WTC11 (cell line): ENCODE measurements at regions of chr4 and their contacts with region 1.

Region 1: DNA sequence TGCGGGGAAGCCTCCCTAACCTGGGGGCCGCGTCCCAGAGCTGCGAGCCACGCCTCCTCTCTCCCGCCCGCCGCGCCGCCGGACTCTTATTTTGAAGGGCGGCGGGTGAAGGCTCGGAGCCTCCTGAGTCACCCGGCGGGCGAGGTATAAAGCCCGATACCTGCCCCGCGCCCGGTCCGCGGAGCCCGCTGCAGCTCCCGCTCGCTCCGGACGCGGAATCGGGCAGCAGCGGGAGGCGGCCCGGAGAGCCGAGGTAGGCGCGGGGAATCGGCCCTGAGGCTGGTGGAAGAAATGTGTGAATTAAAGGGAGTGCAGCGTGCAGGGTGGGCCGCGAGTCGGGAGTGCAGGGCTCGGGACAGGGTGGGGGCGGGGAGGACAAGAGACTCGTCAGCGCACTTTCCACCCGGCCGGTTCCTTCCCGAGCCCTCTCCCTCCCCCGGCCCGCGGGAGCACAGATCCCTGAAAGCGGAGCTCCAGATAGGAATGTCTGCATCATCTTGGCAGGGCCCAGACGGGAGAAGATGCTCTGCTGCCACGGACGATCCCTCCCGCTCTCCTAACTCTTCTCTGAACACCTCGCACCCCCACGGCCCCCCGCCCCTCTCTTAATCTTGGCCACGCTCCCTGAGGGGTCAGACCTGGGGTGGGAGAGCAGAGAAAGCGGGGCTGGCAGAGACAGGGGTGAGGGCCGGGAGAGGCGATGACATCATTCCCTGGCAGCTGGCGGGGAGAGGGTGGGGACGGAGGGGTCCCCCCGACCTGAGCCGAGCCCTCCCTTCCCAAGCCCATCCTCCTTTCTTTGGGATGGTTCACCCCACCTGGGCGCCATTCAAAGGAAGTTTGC is 177.9 kb downstream of the CBR4 start:
- DNase-seq: peak; percentile 85
- ATAC-seq: peak; percentile 74
- H3K4me3 Mint-ChIP-seq: peak overlapping the region; percentile 98
- H3K27ac Mint-ChIP-seq: peak overlapping the region; percentile 96
- H3K4me1 Mint-ChIP-seq: peaks cover 42% of the 10 kb centered on the region
- H3K27me3 Mint-ChIP-seq: peaks cover 29% of the 10 kb centered on the region
- CTCF ChIP-seq: no peak

Region 2: DNA sequence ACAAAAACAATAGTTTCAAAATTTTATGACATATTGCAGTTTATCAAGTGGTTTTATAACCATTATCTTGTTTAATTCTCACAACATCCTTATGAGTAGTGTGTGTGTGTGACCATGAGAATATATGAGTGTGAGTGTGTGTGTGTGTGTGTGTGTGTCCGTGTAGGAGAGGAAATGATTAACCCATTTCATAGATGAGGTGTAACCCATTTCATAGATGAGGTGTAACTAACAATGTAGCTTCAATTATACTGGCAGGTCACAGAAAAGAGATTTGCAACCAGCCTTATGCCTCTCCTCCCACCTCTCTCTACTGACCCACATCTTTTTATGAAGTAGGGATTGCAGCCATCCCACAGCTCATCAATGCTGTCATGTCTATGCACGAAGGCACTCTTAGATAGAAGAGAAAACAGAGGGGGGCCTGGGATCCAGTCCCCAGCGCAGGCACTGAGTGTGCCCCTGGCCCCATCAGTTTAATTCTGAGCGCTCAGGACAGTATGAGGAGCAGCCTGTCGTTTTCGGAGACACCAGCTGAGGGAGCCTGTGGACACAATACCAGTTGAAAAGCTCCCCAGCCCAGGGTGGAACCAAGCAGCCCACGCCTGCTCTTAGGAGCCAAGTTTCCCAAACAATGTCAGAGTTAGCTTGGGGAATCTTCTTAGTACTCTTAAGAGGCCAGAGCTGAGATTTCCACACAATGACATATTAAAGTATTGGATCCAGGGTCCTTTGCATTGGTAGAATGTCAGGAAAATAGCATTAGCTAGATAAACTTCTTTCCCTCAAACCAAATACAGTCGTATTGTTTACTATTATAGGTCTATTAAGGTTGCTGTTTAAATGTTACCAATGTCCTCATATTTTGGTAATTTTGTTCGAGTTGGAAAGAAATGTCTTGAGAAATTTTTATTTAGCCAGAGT is 246.7 kb before region 1 on chr4:
- CTCF ChIA-PET with region 1: interaction called, 10 read pairs
- POLR2A ChIA-PET with region 1: no interaction called
- DNase-seq: peak; percentile 85
- ATAC-seq: peak; percentile 100
- H3K4me3 Mint-ChIP-seq: no peak overlapping the region
- H3K27ac Mint-ChIP-seq: no peak overlapping the region
- H3K4me1 Mint-ChIP-seq: peaks cover 4% of the 10 kb centered on the region
- H3K27me3 Mint-ChIP-seq: no peaks in the 10 kb centered on the region
- CTCF ChIP-seq: peak; percentile 50; the same call in 1 of the 2 replicates

Region 3: GRCh38 chr4:168710353-168710946 is 121.7 kb before region 1 on chr4:
- CTCF ChIA-PET with region 1: interaction called, 27 read pairs
- POLR2A ChIA-PET with region 1: no interaction called
- DNase-seq: no peak
- ATAC-seq: peak; percentile 75
- H3K4me3 Mint-ChIP-seq: no peak overlapping the region
- H3K27ac Mint-ChIP-seq: no peak overlapping the region
- H3K4me1 Mint-ChIP-seq: peaks cover 5% of the 10 kb centered on the region; the same call in 1 of the 2 replicates
- H3K27me3 Mint-ChIP-seq: 0 out of 2 replicates have a peak, but pooled peaks cover 3% of the 10 kb centered on the region
- CTCF ChIP-seq: no peak

Region 4: GRCh38 chr4:168815379-168816345 is 16.5 kb before region 1 on chr4:
- CTCF ChIA-PET with region 1: interaction called, 14 read pairs
- POLR2A ChIA-PET with region 1: interaction called, 43 read pairs
- DNase-seq: no peak
- ATAC-seq: no peak
- H3K4me3 Mint-ChIP-seq: no peak overlapping the region
- H3K27ac Mint-ChIP-seq: peak overlapping the region; percentile 89
- H3K4me1 Mint-ChIP-seq: peaks cover 44% of the 10 kb centered on the region
- H3K27me3 Mint-ChIP-seq: no peaks in the 10 kb centered on the region
- CTCF ChIP-seq: no peak

Region 5: GRCh38 chr4:168847771-168848511 is 15.8 kb after region 1 on chr4:
- CTCF ChIA-PET with region 1: interaction called, 10 read pairs
- POLR2A ChIA-PET with region 1: interaction called, 9 read pairs
- DNase-seq: no peak
- ATAC-seq: peak; percentile 10; the same call in 1 of the 2 replicates
- H3K4me3 Mint-ChIP-seq: no peak overlapping the region
- H3K27ac Mint-ChIP-seq: no peak overlapping the region
- H3K4me1 Mint-ChIP-seq: peaks cover 76% of the 10 kb centered on the region
- H3K27me3 Mint-ChIP-seq: no peaks in the 10 kb centered on the region
- CTCF ChIP-seq: no peak

Region 6: GRCh38 chr4:168917138-168917779 is 85.1 kb after region 1 on chr4:
- CTCF ChIA-PET with region 1: interaction called, 43 read pairs
- POLR2A ChIA-PET with region 1: interaction called, 4 read pairs
- DNase-seq: no peak
- ATAC-seq: no peak
- H3K4me3 Mint-ChIP-seq: no peak overlapping the region
- H3K27ac Mint-ChIP-seq: no peak overlapping the region
- H3K4me1 Mint-ChIP-seq: peaks cover 33% of the 10 kb centered on the region
- H3K27me3 Mint-ChIP-seq: no peaks in the 10 kb centered on the region
- CTCF ChIP-seq: no peak